H1 (cell line): ENCODE measurements at regions of chr19 and their contacts with region 1.

Region 1: DNA sequence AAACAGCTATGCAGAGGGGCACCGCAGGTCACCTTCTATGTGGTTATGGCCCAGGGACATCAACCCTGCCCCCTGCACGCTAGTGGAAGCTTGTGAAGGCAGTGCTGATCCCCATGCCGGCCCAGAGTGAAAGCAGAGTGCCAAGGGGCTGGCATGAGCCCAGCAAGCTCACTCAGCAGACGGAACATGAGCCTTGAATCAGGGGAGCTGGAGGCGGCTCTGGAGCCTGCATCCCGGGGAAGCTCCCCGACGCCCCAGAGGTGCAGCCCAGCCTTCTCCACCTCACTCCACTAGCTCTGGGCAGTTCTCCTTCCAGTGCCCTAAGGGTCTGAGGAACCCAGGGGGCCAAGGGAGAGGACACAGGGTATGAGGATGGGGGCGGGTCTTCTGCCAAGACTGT is 19.0 kb upstream of the ISYNA1 start:
- DNase-seq: no peak
- H3K4me3 ChIP-seq: no peak overlapping the region
- H3K27ac ChIP-seq: no peak overlapping the region
- H3K4me1 ChIP-seq: no peaks in the 10 kb centered on the region; a peak in 1 of 7 replicates
- H3K27me3 ChIP-seq: no peaks in the 10 kb centered on the region
- CTCF ChIP-seq: no peak
- EP300 ChIP-seq: no peak
- POLR2A ChIP-seq: no peak
- RAD21 ChIP-seq: no peak

Region 2: DNA sequence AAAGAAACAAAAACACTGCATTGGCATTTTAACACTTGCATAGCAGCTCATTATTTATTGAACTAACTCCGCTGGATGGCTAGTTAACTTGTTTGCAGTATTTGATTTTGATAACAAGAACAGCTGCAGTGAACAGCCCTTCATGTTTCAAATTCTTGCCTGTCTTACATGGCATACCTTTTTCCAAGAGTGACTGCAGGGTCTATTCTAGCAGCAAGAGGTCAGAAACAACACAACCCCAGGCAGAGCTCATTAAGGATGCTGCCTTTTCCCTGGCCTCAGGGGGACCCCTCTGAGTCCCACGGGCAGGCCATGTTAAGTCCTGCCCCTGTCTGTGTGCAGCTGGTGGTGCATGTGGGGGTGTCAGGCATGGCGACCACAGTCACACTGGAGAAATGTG is 99.9 kb before region 1 on chr19:
- CTCF ChIA-PET with region 1: no interaction called
- POLR2A ChIA-PET with region 1: no interaction called
- DNase-seq: no peak
- H3K4me3 ChIP-seq: no peak overlapping the region
- H3K27ac ChIP-seq: no peak overlapping the region
- H3K4me1 ChIP-seq: no peaks in the 10 kb centered on the region
- H3K27me3 ChIP-seq: no peaks in the 10 kb centered on the region
- CTCF ChIP-seq: no peak
- EP300 ChIP-seq: no peak
- POLR2A ChIP-seq: no peak
- RAD21 ChIP-seq: no peak

Region 3: GRCh38 chr19:18373892-18374629 is 82.9 kb before region 1 on chr19:
- CTCF ChIA-PET with region 1: no interaction called
- POLR2A ChIA-PET with region 1: no interaction called
- DNase-seq: peak; percentile 81 to 86
- H3K4me3 ChIP-seq: no peak overlapping the region
- H3K27ac ChIP-seq: peak overlapping the region; percentile 59
- H3K4me1 ChIP-seq: peaks cover 3 to 21% (median 8%) of the 10 kb centered on the region in 4 experiments; a peak in 6 of 7 replicates
- H3K27me3 ChIP-seq: no peaks in the 10 kb centered on the region
- CTCF ChIP-seq: no peak
- EP300 ChIP-seq: peak in 1 of 2 experiments; percentile 83; a peak in 2 of 3 replicates
- POLR2A ChIP-seq: 0 out of 3 replicates have a peak, but pooled peaks of 1 of the 2 experiments have one; percentile 45
- RAD21 ChIP-seq: no peak

Region 4: GRCh38 chr19:18484992-18485391 is 28.0 kb after region 1 on chr19:
- CTCF ChIA-PET with region 1: interaction called, 11 read pairs
- POLR2A ChIA-PET with region 1: no interaction called
- DNase-seq: no peak
- H3K4me3 ChIP-seq: no peak overlapping the region
- H3K27ac ChIP-seq: no peak overlapping the region
- H3K4me1 ChIP-seq: peaks cover 0 to 16% (median 8%) of the 10 kb centered on the region in 4 experiments; a peak in 5 of 7 replicates
- H3K27me3 ChIP-seq: no peaks in the 10 kb centered on the region
- CTCF ChIP-seq: peak; percentile 22 to 38 (median 23)
- EP300 ChIP-seq: no peak
- POLR2A ChIP-seq: no peak
- RAD21 ChIP-seq: peak in 1 of 2 experiments; percentile 18; a peak in 1 of 4 replicates